CD8-positive, alpha-beta T cell (primary cell): ENCODE measurements at regions of chr1 and their contacts with region 1.

Region 1: GRCh38 chr1:160342953-160343869 is at the starts of genes COPA and NCSTN:
- DNase-seq: peak; percentile 82 to 97 (median 89)
- ATAC-seq: peak; percentile 98
- H3K4me3 ChIP-seq: peak within 1 kb of the TSS; percentile 78 to 98
- H3K4me3 Mint-ChIP-seq: peak within 1 kb of the TSS; percentile 100
- H3K27ac ChIP-seq: peak within 1 kb of the TSS; percentile 88 to 97
- H3K27ac Mint-ChIP-seq: peak within 1 kb of the TSS; percentile 100
- H3K4me1 ChIP-seq: peaks cover 12% of the 10 kb centered on the region
- H3K4me1 Mint-ChIP-seq: peaks cover 72% of the 10 kb centered on the region
- H3K27me3 ChIP-seq: no peaks in the 10 kb centered on the region
- H3K27me3 Mint-ChIP-seq: no peaks in the 10 kb centered on the region
- CTCF ChIP-seq: no peak
- total RNA-seq, gene COPA: 116 to 126 TPM
- total RNA-seq, gene NCSTN: 55.6 to 58.4 TPM

Region 2: DNA sequence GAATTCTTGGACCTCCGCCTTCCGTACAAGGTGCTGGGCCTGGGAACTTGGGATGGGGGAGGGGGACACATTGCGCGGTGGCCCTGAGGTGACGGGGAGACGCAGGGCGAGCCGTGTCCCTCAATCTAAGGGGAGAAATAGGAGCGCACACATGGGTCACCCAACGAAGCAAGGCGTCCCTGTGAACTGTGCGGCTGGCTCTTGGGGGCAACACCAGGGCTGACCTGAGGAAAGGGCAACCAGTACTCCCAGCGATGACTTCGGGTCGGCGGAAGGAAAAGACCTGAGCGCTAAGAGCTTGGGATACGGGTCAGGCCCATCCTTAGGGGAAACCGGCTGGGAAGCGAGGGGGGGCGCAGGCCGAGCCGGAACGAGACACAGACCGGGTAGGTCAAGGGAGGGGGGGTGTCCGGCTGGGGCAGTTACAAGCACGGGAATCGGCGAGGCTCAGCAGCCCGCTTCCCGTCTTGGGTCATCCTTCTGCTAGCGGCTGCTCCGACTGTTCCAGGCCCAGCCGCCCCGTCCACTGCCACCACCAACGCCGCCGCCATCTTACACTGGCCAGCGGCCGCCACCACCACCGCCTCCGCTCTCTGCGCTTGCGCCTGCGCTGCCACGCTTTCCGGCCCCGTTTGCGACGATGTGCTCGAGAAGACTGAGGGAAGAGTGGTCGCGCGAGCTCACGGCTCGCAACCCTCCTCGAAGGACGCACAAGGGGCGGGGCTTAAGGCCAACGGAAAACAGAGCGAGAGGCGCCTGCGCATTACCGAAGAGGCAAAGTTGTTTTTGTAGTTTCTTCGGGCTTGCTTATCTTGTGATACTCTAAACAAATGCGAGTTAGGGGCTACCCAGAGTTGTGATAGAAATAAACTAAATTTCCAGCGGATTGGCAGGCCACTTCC is 81.1 kb before region 1 on chr1 and contains the start of gene DCAF8:
- CTCF ChIA-PET with region 1: no interaction called
- POLR2A ChIA-PET with region 1: interaction called, 3 read pairs
- intact Hi-C with region 1: loop called (anchors 1 to 2 kb)
- DNase-seq: peak; percentile 97 to 99 (median 98)
- ATAC-seq: peak; percentile 87
- H3K4me3 ChIP-seq: peak within 1 kb of the TSS; percentile 91 to 99
- H3K4me3 Mint-ChIP-seq: peak within 1 kb of the TSS; percentile 96
- H3K27ac ChIP-seq: peak within 1 kb of the TSS; percentile 83 to 99
- H3K27ac Mint-ChIP-seq: peak within 1 kb of the TSS; percentile 98
- H3K4me1 ChIP-seq: peaks cover 31% of the 10 kb centered on the region
- H3K4me1 Mint-ChIP-seq: peaks cover 41% of the 10 kb centered on the region
- H3K27me3 ChIP-seq: no peaks in the 10 kb centered on the region
- H3K27me3 Mint-ChIP-seq: no peaks in the 10 kb centered on the region
- CTCF ChIP-seq: no peak
- total RNA-seq, gene DCAF8: 152 to 162 TPM

Region 3: DNA sequence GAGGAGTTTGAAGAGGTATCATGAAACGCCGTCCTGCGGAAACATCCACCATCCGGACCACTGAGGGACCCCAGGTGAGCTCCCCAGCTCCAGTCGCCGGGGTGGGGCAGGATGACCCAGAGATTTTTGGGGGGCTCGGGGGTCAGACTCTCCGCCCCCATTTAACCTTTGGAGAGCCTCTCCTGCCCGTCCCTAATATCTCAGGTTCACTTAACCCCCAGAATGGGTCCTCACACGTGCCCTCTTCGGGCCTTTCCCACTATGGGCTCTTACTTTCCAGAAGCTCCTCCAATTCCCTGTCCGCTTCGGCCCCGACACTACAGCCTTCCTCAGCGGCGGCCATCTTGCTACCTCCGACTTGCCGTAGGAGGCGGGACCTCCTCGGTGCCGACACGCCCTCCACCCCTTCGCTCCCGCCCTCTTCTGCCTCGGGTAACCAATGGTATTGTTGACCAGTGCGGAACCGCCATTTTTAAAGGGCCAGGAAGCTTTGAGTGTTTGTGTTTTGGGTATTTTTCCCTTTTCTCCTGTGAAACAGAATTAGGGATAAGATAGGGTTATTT is 58.3 kb before region 1 on chr1 and contains the start of gene PEX19:
- CTCF ChIA-PET with region 1: no interaction called
- POLR2A ChIA-PET with region 1: interaction called, 3 read pairs
- intact Hi-C with region 1: loop called in 1 of 2 experiments (anchors 1 kb)
- DNase-seq: peak; percentile 87 to 96 (median 93)
- ATAC-seq: peak; percentile 100
- H3K4me3 ChIP-seq: peak within 1 kb of the TSS; percentile 73 to 89
- H3K4me3 Mint-ChIP-seq: peak within 1 kb of the TSS; percentile 94
- H3K27ac ChIP-seq: peak within 1 kb of the TSS; percentile 62 to 75
- H3K27ac Mint-ChIP-seq: peak within 1 kb of the TSS; percentile 91
- H3K4me1 ChIP-seq: peaks cover 22% of the 10 kb centered on the region
- H3K4me1 Mint-ChIP-seq: peaks cover 21% of the 10 kb centered on the region
- H3K27me3 ChIP-seq: no peaks in the 10 kb centered on the region
- H3K27me3 Mint-ChIP-seq: no peaks in the 10 kb centered on the region
- CTCF ChIP-seq: no peak
- total RNA-seq, gene PEX19: 36.0 to 37.4 TPM

Region 4: DNA sequence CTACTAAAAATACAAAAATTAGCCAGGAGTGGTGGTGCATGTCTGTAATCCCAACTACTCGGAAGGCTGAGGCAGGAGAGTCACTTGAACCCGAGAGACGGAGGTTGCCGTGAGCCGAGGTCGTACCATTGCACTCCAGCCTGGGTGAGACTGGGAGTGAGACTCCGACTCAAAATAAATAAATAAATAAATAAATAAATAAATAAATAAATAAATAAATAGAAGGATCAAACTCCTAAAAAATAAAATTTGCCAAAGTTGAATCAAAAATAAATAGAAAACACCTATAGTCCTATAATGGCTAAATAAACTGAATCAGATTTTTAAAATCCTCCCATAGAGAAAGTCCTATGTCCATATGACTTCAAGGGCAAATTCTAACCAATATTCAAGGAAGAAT is 43.0 kb before region 1 on chr1:
- CTCF ChIA-PET with region 1: no interaction called
- POLR2A ChIA-PET with region 1: no interaction called
- intact Hi-C with region 1: no loop called
- DNase-seq: no peak
- ATAC-seq: no peak
- H3K4me3 ChIP-seq: no peak overlapping the region
- H3K4me3 Mint-ChIP-seq: no peak overlapping the region
- H3K27ac ChIP-seq: no peak overlapping the region
- H3K27ac Mint-ChIP-seq: peak overlapping the region; percentile 45
- H3K4me1 ChIP-seq: no peaks in the 10 kb centered on the region
- H3K4me1 Mint-ChIP-seq: no peaks in the 10 kb centered on the region
- H3K27me3 ChIP-seq: no peaks in the 10 kb centered on the region
- H3K27me3 Mint-ChIP-seq: no peaks in the 10 kb centered on the region
- CTCF ChIP-seq: no peak

Region 5: GRCh38 chr1:160400223-160400645 is 57.0 kb after region 1 on chr1 and contains the start of gene VANGL2:
- CTCF ChIA-PET with region 1: no interaction called
- POLR2A ChIA-PET with region 1: no interaction called
- intact Hi-C with region 1: no loop called
- DNase-seq: peak in 8 of 9 experiments; percentile 26 to 64 (median 49)
- ATAC-seq: peak; percentile 64
- H3K4me3 ChIP-seq: peak within 1 kb of the TSS; percentile 39 to 54
- H3K4me3 Mint-ChIP-seq: peak within 1 kb of the TSS; percentile 83
- H3K27ac ChIP-seq: no peak within 1 kb of the TSS
- H3K27ac Mint-ChIP-seq: no peak within 1 kb of the TSS
- H3K4me1 ChIP-seq: peaks cover 13% of the 10 kb centered on the region
- H3K4me1 Mint-ChIP-seq: peaks cover 10% of the 10 kb centered on the region
- H3K27me3 ChIP-seq: peaks cover 0 to 11% of the 10 kb centered on the region in 2 experiments
- H3K27me3 Mint-ChIP-seq: peaks cover 13% of the 10 kb centered on the region
- CTCF ChIP-seq: no peak
- total RNA-seq, gene VANGL2: not detected

Region 6: DNA sequence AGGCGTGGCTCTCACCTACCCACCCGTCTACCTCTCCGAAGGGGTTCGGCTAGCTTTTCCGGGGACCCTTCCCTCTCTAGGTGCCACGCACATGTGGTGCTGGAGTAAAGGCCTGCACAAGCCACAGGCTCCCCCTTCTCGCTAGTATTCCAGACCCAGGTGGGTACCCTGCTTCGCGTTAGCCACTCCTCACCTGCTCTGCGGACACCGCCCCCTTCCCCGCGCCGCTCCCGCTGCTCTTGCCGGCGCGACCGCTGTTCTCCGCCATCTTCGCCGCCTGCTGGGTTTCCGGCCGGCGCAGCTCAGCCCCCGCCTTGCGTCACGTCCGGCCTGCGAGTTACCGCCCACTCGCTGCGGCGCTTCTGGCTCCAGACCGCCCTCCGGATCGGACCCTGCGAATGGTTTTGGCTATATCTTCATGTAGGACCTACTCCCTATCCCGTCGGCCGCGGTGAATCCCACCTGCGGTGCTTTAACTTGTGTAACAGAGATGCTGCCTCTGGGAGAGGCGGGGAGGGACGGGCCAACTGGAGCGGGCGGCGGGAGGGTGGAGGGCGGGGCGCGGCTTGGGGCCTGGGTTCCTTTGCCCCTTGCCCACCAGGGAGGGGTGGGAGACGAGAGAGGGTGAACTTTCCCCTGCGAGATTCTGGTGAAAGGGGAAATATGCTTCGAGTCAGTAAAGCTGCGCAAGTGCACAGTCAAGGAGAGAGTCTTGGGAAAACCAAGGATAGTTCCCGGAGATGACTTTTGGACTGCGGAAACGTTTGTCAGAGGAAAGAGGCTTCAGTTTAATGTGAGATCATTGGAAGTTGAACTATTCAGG is 774.8 kb after region 1 on chr1 and contains the starts of genes NIT1 and PFDN2:
- CTCF ChIA-PET with region 1: no interaction called
- POLR2A ChIA-PET with region 1: no interaction called
- intact Hi-C with region 1: loop called in 1 of 2 experiments (anchors 5 kb)
- DNase-seq: peak; percentile 67 to 93 (median 84)
- ATAC-seq: peak; percentile 72
- H3K4me3 ChIP-seq: peak within 1 kb of the TSS; percentile 95 to 96
- H3K4me3 Mint-ChIP-seq: peak within 1 kb of the TSS; percentile 93
- H3K27ac ChIP-seq: peak within 1 kb of the TSS; percentile 91 to 93
- H3K27ac Mint-ChIP-seq: peak within 1 kb of the TSS; percentile 95
- H3K4me1 ChIP-seq: peaks cover 43% of the 10 kb centered on the region
- H3K4me1 Mint-ChIP-seq: peaks cover 60% of the 10 kb centered on the region
- H3K27me3 ChIP-seq: no peaks in the 10 kb centered on the region
- H3K27me3 Mint-ChIP-seq: no peaks in the 10 kb centered on the region
- CTCF ChIP-seq: no peak
- total RNA-seq, gene NIT1: 11.5 to 12.8 TPM
- total RNA-seq, gene PFDN2: 64.7 to 75.5 TPM

Region 7: DNA sequence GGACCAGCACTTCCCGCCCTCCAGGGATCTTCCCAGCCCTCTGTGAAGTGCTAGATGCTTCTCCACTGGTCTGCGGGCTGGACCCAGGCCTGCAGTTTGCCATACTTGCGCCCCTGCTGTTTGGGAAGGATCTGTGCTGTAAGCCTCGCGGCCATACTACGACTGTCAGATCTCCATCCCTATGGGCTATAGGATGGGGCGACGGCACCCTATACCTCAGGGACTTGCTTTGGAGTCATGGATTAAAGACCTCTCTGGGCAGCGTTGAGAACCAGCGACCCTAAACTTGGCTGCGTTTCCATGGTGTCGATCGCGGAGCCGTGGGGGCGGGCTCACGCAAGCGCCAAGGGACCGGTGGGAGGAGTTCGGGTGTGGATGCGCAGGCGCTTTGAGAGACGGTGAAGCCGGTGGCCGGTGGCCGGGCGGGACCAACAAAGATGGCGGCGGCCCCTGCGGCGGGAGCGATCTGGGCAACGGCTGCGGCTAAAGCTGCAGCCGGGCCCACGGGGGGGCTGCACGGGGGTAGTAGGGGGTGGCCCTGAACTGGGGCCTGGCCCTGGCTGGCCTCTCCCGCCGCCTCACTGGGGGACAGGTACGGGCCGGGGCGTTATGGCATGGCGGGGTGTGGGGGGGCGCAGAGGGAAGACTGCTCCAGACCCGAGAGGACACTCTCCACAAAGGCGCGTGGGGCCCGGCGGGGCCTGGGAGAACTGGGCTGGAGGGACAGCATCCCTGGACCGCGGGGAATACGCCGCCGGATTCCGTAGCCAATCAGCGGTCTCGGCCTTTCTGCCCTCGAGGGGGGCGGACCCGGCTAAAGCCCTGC is 816.1 kb after region 1 on chr1 and contains the start of gene USP21:
- CTCF ChIA-PET with region 1: no interaction called
- POLR2A ChIA-PET with region 1: no interaction called
- intact Hi-C with region 1: loop called in 1 of 2 experiments (anchors 10 kb)
- DNase-seq: peak; percentile 84 to 95 (median 93)
- ATAC-seq: peak; percentile 96
- H3K4me3 ChIP-seq: peak within 1 kb of the TSS; percentile 76 to 82
- H3K4me3 Mint-ChIP-seq: peak within 1 kb of the TSS; percentile 94
- H3K27ac ChIP-seq: peak within 1 kb of the TSS; percentile 72 to 82
- H3K27ac Mint-ChIP-seq: peak within 1 kb of the TSS; percentile 95
- H3K4me1 ChIP-seq: peaks cover 37% of the 10 kb centered on the region
- H3K4me1 Mint-ChIP-seq: peaks cover 58% of the 10 kb centered on the region
- H3K27me3 ChIP-seq: no peaks in the 10 kb centered on the region
- H3K27me3 Mint-ChIP-seq: no peaks in the 10 kb centered on the region
- CTCF ChIP-seq: no peak
- total RNA-seq, gene USP21: 34.8 to 38.1 TPM

Region 8: DNA sequence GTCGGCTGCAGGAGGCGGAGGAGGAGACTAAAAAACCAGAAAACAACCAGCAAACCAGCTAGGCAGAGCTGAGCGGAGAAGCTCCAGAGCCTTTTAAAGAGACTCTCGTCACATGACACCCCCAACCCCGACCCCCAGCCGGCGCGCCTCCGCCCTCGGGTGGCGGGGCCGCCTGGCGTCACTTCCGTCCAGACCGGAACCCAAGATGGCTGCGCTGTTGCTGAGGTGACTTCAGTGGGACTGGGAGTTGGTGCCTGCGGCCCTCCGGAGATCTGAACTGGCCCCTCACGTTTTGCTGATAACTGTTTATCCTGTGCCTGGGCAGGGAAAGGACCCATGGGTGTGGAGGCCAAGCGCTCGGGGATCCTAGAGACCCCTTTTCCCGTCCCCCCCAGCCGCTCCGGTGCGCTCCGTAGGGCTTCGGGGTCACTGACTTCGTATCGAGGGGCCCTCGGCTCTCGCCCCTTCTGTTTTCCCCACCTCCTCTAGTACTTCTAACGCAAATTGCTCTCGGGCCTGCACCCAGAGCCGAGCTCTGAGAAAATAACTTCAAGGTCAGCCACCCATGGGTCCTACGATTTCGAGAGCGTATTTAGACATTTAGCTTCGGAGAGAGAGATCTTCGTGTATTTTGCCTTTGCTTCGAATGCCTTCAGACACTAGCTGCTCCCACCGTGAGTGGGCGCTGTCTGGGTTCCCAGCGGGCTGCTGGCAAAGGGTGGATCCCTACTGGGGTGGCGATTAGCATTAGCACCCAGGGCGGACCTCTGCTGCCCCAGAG is 971.2 kb after region 1 on chr1 and contains the start of gene SDHC:
- CTCF ChIA-PET with region 1: no interaction called
- POLR2A ChIA-PET with region 1: no interaction called
- intact Hi-C with region 1: loop called in 1 of 2 experiments (anchors 2 kb)
- DNase-seq: peak; percentile 79 to 95 (median 92)
- ATAC-seq: peak; percentile 95
- H3K4me3 ChIP-seq: peak within 1 kb of the TSS; percentile 63 to 90
- H3K4me3 Mint-ChIP-seq: peak within 1 kb of the TSS; percentile 97
- H3K27ac ChIP-seq: peak within 1 kb of the TSS; percentile 88 to 98
- H3K27ac Mint-ChIP-seq: peak within 1 kb of the TSS; percentile 99
- H3K4me1 ChIP-seq: peaks cover 14% of the 10 kb centered on the region
- H3K4me1 Mint-ChIP-seq: peaks cover 25% of the 10 kb centered on the region
- H3K27me3 ChIP-seq: no peaks in the 10 kb centered on the region
- H3K27me3 Mint-ChIP-seq: no peaks in the 10 kb centered on the region
- CTCF ChIP-seq: peak; percentile 38
- total RNA-seq, gene SDHC: 41.5 to 41.9 TPM

Region 9: GRCh38 chr1:161749509-161750407 is 1406.5 kb after region 1 on chr1 and contains the start of gene DUSP12:
- CTCF ChIA-PET with region 1: no interaction called
- POLR2A ChIA-PET with region 1: no interaction called
- intact Hi-C with region 1: loop called (anchors 2 to 5 kb)
- DNase-seq: peak; percentile 70 to 92 (median 85)
- ATAC-seq: peak; percentile 95
- H3K4me3 ChIP-seq: peak within 1 kb of the TSS; percentile 88 to 99
- H3K4me3 Mint-ChIP-seq: peak within 1 kb of the TSS; percentile 100
- H3K27ac ChIP-seq: peak within 1 kb of the TSS; percentile 68 to 76
- H3K27ac Mint-ChIP-seq: peak within 1 kb of the TSS; percentile 96
- H3K4me1 ChIP-seq: peaks cover 23% of the 10 kb centered on the region
- H3K4me1 Mint-ChIP-seq: peaks cover 41% of the 10 kb centered on the region
- H3K27me3 ChIP-seq: no peaks in the 10 kb centered on the region
- H3K27me3 Mint-ChIP-seq: peaks cover 6% of the 10 kb centered on the region
- CTCF ChIP-seq: no peak
- total RNA-seq, gene DUSP12: 27.9 to 31.1 TPM